Naive thymus-derived CD4-positive, alpha-beta T cell (primary cell): ENCODE measurements at regions of chr10 and their contacts with region 1.

Region 1: DNA sequence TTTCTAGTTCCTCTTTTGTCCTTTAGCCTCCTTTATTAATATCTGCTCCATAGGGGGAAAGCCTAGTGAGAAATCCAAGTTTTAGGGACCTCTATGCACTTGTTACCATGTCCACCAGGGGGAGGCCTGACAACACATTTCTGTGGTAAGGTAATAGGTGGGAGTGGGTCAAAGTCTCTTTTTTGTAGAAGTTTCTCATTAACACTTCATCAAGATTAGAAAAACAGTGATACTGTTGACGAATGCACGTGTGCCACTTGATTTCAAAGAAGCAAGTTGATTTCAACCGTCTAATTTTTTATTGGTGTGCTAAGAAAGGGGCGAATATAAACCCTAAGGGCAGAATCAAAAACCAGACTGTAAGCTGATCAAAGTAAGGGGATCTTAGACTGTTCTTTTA is 30.6 kb downstream of the CISD1 start:
- DNase-seq: peak; percentile 18 to 63 (median 49)
- ATAC-seq: peak; percentile 94
- H3K4me3 ChIP-seq: no peak overlapping the region
- H3K4me3 Mint-ChIP-seq: no peak overlapping the region
- H3K27ac ChIP-seq: no peak overlapping the region
- H3K27ac Mint-ChIP-seq: no peak overlapping the region
- H3K4me1 ChIP-seq: no peaks in the 10 kb centered on the region
- H3K4me1 Mint-ChIP-seq: peaks cover 0 to 5% (median 0%) of the 10 kb centered on the region in 7 donors
- H3K27me3 ChIP-seq: no peaks in the 10 kb centered on the region
- H3K27me3 Mint-ChIP-seq: peaks cover 9 to 25% (median 14%) of the 10 kb centered on the region in 5 donors

Region 2: DNA sequence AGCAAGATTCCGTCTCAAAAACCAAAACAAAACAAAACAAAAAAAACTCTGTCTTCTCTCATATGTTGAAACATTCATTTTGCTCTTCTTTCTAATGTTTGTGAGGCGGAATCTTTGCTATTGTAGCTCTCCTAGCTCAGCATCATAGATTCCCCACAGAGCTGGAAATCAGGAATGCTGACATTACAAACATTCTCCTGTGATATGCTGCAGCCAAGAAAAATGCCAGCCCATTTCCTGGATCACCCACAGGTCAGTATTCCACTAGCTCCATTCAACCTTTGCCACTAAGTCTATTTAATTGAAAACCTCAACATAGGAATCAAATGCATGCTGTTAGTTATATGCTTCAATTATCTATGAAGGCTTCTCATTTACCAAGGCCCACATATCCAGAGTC is 218.2 kb before region 1 on chr10:
- CTCF ChIA-PET with region 1: no interaction called
- POLR2A ChIA-PET with region 1: no interaction called
- intact Hi-C with region 1: no loop called
- DNase-seq: no peak
- ATAC-seq: no peak
- H3K4me3 ChIP-seq: no peak overlapping the region
- H3K4me3 Mint-ChIP-seq: no peak overlapping the region
- H3K27ac ChIP-seq: no peak overlapping the region
- H3K27ac Mint-ChIP-seq: no peak overlapping the region
- H3K4me1 ChIP-seq: no peaks in the 10 kb centered on the region
- H3K4me1 Mint-ChIP-seq: no peaks in the 10 kb centered on the region
- H3K27me3 ChIP-seq: no peaks in the 10 kb centered on the region
- H3K27me3 Mint-ChIP-seq: peaks cover 0 to 28% (median 13%) of the 10 kb centered on the region in 5 donors

Region 3: DNA sequence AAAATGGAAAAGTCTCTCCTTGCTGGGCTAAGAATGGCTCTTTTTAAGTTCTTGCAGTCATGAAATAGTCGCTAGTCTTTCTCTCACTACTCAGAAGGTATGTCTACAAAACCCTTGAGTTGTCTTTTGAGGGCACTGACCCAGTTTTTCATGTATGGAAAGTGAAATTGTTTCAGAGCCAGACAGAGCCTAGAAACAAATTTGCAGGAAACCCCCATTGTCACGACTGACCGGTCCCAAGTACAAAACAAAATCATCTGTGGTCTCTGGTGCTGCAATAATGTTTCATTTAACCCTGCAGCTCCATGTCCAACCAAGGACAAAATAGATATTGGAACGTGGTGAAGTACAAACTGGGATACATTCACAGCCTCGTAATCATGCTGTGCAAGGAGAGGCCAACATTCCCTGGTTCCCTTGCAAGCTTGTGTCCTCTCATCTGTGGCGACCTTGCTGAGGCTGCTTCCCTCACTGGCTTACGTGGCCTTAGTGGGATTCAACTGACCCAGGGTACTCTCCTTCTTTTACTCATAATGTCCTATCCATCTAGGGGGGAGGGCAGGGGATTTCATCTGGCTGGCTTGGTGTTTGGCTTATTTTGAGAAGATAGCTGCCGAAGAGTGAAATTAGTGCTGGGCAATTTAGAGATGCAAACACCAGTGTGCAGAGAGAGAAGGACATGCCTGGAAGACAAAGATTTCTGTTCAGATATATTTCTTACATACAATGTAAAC is 204.4 kb before region 1 on chr10:
- CTCF ChIA-PET with region 1: no interaction called
- POLR2A ChIA-PET with region 1: no interaction called
- intact Hi-C with region 1: no loop called
- DNase-seq: no peak
- ATAC-seq: no peak
- H3K4me3 ChIP-seq: no peak overlapping the region
- H3K4me3 Mint-ChIP-seq: no peak overlapping the region
- H3K27ac ChIP-seq: no peak overlapping the region
- H3K27ac Mint-ChIP-seq: no peak overlapping the region
- H3K4me1 ChIP-seq: no peaks in the 10 kb centered on the region
- H3K4me1 Mint-ChIP-seq: peaks cover 0 to 7% (median 0%) of the 10 kb centered on the region in 7 donors
- H3K27me3 ChIP-seq: no peaks in the 10 kb centered on the region
- H3K27me3 Mint-ChIP-seq: peaks cover 0 to 14% (median 4%) of the 10 kb centered on the region in 5 donors

Region 4: DNA sequence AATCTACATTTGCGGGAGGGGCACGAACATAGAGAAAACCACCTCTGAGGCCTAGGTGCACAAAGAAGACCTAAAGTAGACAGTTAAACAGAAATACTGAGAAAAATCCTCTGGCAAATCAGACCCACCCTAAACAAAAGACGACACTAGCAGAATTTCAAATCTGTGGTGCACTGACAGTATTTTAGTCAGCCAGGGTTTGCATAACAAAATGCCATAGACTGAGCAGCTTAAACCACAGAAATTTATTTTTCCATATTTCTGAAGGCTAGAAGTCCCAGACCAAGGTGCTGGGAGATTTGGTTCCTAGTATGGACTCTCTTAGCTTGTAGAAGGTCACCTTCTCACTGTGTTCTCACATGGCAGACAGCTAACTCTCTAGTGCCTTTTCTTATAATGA is 58.2 kb before region 1 on chr10:
- CTCF ChIA-PET with region 1: no interaction called
- POLR2A ChIA-PET with region 1: no interaction called
- intact Hi-C with region 1: no loop called
- DNase-seq: no peak
- ATAC-seq: no peak
- H3K4me3 ChIP-seq: no peak overlapping the region
- H3K4me3 Mint-ChIP-seq: peak overlapping the region in 2 of 10 donors; percentile 24 to 39
- H3K27ac ChIP-seq: no peak overlapping the region
- H3K27ac Mint-ChIP-seq: peak overlapping the region in 1 of 9 donors; percentile 18
- H3K4me1 ChIP-seq: no peaks in the 10 kb centered on the region
- H3K4me1 Mint-ChIP-seq: peaks cover 23 to 41% (median 34%) of the 10 kb centered on the region in 7 donors
- H3K27me3 ChIP-seq: no peaks in the 10 kb centered on the region
- H3K27me3 Mint-ChIP-seq: no peaks in the 10 kb centered on the region

Region 5: DNA sequence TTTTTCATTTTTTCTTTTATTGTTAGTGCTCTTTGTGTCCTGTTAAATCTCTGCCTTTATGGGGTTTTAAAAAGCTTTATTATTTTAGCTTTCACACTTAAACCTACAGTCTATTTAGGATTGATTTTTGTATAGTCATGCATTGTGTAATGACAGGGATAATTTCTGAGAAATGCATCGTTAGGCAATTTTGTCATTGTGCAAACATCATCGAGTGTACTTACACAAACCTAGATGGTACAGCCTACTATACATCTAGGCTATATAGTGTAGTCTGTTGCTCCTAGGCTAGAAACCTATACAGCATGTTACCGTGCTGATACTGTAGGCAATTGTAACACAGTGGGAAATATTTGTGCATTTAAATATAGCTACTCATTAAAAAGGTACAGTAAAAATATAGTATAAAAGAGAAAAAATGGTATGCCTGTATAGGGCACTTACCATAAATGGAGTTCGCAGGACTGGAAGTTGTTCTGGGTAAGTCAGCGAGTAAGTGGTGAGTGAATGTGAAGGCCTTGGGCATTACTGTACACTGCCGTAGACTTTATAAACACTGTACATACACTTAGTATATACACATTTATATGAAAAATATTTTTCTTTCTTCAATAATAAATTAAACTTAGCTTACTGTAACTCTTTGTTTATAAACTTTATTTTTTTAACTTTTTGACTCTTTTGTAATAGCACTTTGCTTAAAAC is 51.2 kb after region 1 on chr10:
- CTCF ChIA-PET with region 1: no interaction called
- POLR2A ChIA-PET with region 1: no interaction called
- intact Hi-C with region 1: no loop called
- DNase-seq: no peak
- ATAC-seq: peak; percentile 65
- H3K4me3 ChIP-seq: no peak overlapping the region
- H3K4me3 Mint-ChIP-seq: no peak overlapping the region
- H3K27ac ChIP-seq: no peak overlapping the region
- H3K27ac Mint-ChIP-seq: no peak overlapping the region
- H3K4me1 ChIP-seq: no peaks in the 10 kb centered on the region
- H3K4me1 Mint-ChIP-seq: peaks cover 10 to 74% (median 50%) of the 10 kb centered on the region in 7 donors
- H3K27me3 ChIP-seq: no peaks in the 10 kb centered on the region
- H3K27me3 Mint-ChIP-seq: no peaks in the 10 kb centered on the region

Region 6: GRCh38 chr10:58517481-58518355 is 218.1 kb after region 1 on chr10:
- CTCF ChIA-PET with region 1: no interaction called
- POLR2A ChIA-PET with region 1: no interaction called
- intact Hi-C with region 1: loop called in 1 of 2 experiments (anchors 1 kb)
- DNase-seq: no peak
- ATAC-seq: no peak
- H3K4me3 ChIP-seq: no peak overlapping the region
- H3K4me3 Mint-ChIP-seq: no peak overlapping the region
- H3K27ac ChIP-seq: no peak overlapping the region
- H3K27ac Mint-ChIP-seq: no peak overlapping the region
- H3K4me1 ChIP-seq: no peaks in the 10 kb centered on the region
- H3K4me1 Mint-ChIP-seq: peaks cover 0 to 12% (median 3%) of the 10 kb centered on the region in 7 donors
- H3K27me3 ChIP-seq: peaks cover 0 to 4% of the 10 kb centered on the region in 2 donors
- H3K27me3 Mint-ChIP-seq: peaks cover 35 to 70% (median 68%) of the 10 kb centered on the region in 5 donors

Region 7: GRCh38 chr10:58531084-58531695 is 231.6 kb after region 1 on chr10:
- CTCF ChIA-PET with region 1: no interaction called
- POLR2A ChIA-PET with region 1: no interaction called
- intact Hi-C with region 1: loop called (anchors 1 to 10 kb)
- DNase-seq: peak in 7 of 9 donors; percentile 3 to 46 (median 22)
- ATAC-seq: peak; percentile 78
- H3K4me3 ChIP-seq: no peak overlapping the region
- H3K4me3 Mint-ChIP-seq: no peak overlapping the region
- H3K27ac ChIP-seq: no peak overlapping the region
- H3K27ac Mint-ChIP-seq: no peak overlapping the region
- H3K4me1 ChIP-seq: no peaks in the 10 kb centered on the region
- H3K4me1 Mint-ChIP-seq: no peaks in the 10 kb centered on the region
- H3K27me3 ChIP-seq: no peaks in the 10 kb centered on the region
- H3K27me3 Mint-ChIP-seq: peaks cover 2 to 33% (median 22%) of the 10 kb centered on the region in 5 donors